Astrocyte of the cerebellum (primary cell): ENCODE measurements at regions of chr15 and their contacts with region 1.

Region 1: DNA sequence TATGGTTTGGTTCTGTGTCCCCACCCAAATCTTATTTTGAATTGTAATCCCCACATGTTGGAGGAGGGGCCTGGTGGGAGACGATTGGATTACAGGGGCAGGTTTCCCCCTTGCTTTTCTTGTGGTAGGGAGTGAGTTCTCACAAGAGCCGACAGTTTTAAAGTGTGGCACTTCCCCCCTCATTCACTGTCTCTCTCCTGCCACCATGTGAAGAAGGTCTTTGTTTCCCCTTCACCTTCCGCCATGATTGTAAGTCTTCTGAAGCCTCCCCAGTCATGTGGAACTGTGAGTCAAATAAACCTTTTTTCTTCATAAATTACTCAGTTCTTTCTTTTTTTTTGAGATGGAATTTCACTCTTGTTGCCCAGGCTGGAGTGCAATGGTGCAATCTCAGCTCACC is 124.9 kb downstream of the IQCH start:
- DNase-seq: no peak
- H3K4me3 ChIP-seq: no peak overlapping the region
- CTCF ChIP-seq: no peak

Region 2: DNA sequence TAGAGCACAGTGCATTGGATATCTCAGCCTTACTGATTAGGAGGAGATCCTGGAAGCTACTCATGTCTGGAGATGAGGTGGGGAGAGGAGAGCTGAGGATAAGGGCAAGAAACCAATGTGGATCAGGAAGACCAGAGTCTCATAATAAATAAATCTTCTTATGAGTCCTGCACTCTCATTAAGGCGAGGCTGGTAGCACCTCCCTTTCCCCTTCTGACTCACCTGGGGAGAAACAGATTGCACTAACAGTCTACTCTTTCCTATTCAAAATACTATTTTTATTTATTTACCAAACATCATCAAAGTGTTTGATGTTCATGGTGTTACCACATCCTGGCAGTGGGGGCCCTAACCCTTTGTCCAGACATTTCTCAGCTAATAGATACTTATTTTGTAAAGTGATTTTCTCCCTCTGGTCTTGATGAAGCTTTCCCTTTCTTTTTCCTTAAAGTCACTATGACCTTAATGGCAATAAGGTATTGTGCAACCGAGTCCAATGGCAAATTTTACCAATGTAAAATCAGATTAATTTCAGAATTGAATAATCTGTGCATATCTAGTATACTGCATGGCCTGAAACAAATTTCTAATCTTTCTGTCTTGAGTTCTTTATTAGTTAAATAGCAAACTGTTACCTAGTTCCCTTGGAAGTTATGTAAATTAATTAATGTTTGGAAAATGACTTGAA is 43.9 kb before region 1 on chr15:
- in situ Hi-C with region 1: loop called (anchors 5 kb)
- DNase-seq: no peak
- H3K4me3 ChIP-seq: no peak overlapping the region
- CTCF ChIP-seq: no peak

Region 3: DNA sequence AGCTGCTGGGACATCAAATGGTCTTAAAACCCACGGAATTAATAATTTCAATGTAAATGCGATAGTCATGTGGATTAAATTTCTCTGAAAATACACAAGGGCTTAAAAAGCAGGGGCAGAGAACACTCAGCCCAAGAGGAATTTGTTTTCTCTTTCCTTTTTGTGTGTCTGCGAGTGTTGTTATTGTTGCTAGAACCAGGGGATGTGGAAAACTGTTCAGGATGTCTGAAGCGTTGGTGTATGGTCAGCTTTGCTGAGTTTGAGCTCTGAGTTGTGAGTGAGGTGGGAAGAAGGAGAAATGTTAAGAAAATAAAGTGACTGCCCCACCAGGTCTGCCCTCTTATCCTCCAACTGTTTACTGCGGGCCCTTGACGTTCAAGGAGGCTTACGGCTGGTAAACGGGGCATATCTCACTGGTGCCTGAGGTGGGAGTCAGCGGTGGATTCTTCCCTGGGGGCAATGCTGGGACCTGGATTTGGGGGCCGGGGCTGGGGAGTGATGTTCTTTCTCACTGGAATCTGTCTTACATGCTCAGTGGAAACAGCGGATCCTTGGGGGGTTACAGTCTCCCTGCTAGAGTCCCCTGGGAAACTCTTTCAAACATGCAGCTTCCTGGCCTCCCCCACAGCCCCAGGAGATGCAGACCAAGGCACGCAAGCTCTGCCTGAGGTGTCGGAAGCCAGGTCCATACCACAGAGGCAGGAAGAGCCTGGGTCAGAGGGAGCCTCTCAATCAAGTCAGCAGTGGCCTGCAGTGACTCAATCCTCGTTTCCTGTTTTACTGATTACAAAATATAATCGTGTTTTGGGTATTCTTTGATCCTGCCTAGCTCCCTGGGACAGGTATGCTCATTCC is 1010.6 kb after region 1 on chr15:
- in situ Hi-C with region 1: no loop called
- DNase-seq: no peak
- H3K4me3 ChIP-seq: no peak overlapping the region
- CTCF ChIP-seq: no peak